Activated CD4-positive, alpha-beta T cell treated with anti-CD3 and anti-CD28 coated beads for 36 hours (primary cell): ENCODE measurements at regions of chr12 and their contacts with region 1.

Region 1: GRCh38 chr12:123436017-123436964 is at the start of gene RILPL2:
- DNase-seq: peak; percentile 96
- ATAC-seq: peak; percentile 85
- H3K4me3 Mint-ChIP-seq: peak within 1 kb of the TSS; percentile 95
- H3K27ac Mint-ChIP-seq: peak within 1 kb of the TSS; percentile 98
- H3K4me1 Mint-ChIP-seq: peaks cover 33% of the 10 kb centered on the region
- H3K27me3 Mint-ChIP-seq: no peaks in the 10 kb centered on the region
- total RNA-seq, gene RILPL2: 10.4 to 12.1 TPM

Region 2: DNA sequence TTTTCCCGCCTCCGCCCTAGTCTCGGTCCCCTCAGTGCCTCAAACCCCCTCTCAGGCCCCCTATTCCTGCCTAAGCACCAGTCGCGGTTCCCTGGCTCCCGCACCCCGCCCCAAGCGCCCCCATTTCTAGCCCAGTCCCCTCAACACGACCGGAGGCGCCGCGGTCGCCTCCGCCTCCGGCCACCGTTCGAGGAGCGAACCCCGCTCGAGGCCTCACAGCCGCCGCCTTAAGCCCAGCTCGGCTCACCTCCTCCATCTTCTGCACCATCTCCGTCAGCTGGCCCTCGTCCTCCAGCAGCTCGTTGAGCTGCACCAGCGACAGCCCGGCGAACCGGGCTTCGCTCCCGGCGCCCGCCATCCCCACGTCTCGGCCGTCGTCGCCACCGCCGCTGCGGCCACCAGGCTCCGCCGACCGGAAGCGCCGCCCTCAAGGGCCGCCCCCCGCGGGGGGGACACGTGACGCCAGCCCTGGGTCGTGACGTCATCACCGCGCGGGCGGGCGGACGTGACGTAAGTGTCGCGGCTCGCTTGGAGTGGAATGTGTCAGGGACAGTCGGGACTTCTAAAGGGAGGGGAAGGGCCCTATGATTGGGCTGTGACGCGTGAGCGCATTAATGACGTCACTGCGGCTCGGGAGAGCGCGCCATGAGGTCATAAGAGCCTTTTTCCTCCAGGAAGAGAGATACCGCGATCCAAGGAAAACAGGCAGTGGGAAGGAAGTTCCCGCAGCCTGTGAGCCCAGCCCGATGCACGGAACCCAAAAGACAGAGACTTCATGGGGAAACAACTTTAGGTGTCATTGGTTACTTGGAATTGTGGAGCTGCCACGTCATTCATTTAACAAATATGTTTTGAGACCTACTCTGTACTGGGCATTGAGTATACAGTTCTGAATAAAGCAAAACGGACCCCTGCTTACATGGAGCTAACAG is 540.3 kb before region 1 on chr12 and contains the start of gene VPS37B:
- CTCF ChIA-PET with region 1: no interaction called
- POLR2A ChIA-PET with region 1: no interaction called
- intact Hi-C with region 1: loop called in 1 of 2 experiments (anchors 10 kb)
- DNase-seq: peak; percentile 93
- ATAC-seq: peak; percentile 67
- H3K4me3 Mint-ChIP-seq: peak within 1 kb of the TSS; percentile 86
- H3K27ac Mint-ChIP-seq: peak within 1 kb of the TSS; percentile 87
- H3K4me1 Mint-ChIP-seq: peaks cover 87% of the 10 kb centered on the region
- H3K27me3 Mint-ChIP-seq: peaks cover 7% of the 10 kb centered on the region
- total RNA-seq, gene VPS37B: 9.4 to 11.4 TPM

Region 3: DNA sequence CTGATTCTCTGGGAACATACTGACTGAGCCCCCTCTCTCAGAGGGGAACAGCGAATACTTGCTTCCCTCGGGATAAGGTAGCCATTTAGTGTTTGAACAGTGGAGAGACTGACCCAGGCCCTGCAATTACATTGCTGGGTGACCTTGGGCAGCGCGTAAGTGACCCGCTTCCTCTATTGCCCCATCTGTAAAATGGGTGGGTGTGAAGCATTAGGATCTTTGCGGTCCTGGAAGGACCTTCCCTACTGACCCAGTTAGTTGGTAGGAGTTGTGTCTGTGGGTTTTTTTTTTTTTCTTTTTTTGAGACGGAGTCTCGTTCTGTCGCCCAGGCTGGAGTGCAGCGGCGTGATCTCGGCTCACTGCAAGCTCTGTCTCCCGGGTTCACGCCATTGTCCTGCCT is 53.6 kb before region 1 on chr12:
- CTCF ChIA-PET with region 1: no interaction called
- POLR2A ChIA-PET with region 1: interaction called, 4 read pairs
- intact Hi-C with region 1: loop called (anchors 1 kb)
- DNase-seq: no peak
- ATAC-seq: no peak
- H3K4me3 Mint-ChIP-seq: peak overlapping the region; percentile 50
- H3K27ac Mint-ChIP-seq: no peak overlapping the region
- H3K4me1 Mint-ChIP-seq: peaks cover 8% of the 10 kb centered on the region
- H3K27me3 Mint-ChIP-seq: no peaks in the 10 kb centered on the region

Region 4: GRCh38 chr12:123457980-123458783 is 21.9 kb after region 1 on chr12 and contains the start of gene SNRNP35:
- CTCF ChIA-PET with region 1: interaction called, 3 read pairs
- POLR2A ChIA-PET with region 1: no interaction called
- intact Hi-C with region 1: loop called (anchors 1 to 2 kb)
- DNase-seq: peak; percentile 88
- ATAC-seq: peak; percentile 73
- H3K4me3 Mint-ChIP-seq: peak within 1 kb of the TSS; percentile 98
- H3K27ac Mint-ChIP-seq: peak within 1 kb of the TSS; percentile 100
- H3K4me1 Mint-ChIP-seq: peaks cover 26% of the 10 kb centered on the region
- H3K27me3 Mint-ChIP-seq: no peaks in the 10 kb centered on the region
- total RNA-seq, gene SNRNP35: 24.1 to 24.8 TPM